Left cardiac atrium (tissue), 4 donors: ENCODE measurements at regions of chr9 and their contacts with region 1.

Region 1: GRCh38 chr9:19925817-19926503 is 137.1 kb upstream of the SLC24A2 start:
- DNase-seq: peak; percentile 60
- ATAC-seq: peak; percentile 89 to 97

Region 2: DNA sequence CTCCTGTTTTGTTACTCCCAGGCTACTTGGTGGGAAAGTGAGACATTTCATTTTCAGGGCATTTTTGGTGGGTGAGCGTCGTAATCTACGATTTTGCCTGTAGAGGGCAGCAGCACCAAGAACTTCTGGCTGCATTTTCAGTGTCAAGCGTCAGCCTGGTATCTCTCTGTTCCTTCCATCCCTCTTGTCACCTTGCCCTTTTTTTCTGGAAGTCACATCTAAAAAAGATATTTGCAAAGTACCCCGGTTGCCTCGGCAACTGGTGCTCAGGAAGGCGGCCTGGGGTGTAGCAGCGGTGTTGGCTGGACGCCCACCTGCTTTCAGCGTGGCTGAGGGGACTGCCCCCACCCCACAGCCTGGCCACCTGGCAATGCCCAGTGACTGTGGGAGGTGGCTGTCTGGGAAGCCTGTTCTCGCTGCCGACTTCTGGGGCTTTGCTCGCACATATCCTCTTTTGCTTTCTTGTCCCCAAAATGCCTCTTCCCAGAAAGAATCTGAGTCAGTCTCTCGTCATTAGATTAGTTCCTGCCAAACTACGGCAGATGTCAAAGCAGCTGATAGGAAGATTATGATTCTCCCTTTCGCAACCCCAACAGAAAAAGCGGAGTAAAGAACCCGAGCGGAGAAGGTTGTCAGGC is 432.7 kb before region 1 on chr9:
- intact Hi-C with region 1: loop called in 1 of 2 experiments (anchors 10 kb)
- DNase-seq: peak; percentile 92
- ATAC-seq: peak; percentile 74 to 89

Region 3: DNA sequence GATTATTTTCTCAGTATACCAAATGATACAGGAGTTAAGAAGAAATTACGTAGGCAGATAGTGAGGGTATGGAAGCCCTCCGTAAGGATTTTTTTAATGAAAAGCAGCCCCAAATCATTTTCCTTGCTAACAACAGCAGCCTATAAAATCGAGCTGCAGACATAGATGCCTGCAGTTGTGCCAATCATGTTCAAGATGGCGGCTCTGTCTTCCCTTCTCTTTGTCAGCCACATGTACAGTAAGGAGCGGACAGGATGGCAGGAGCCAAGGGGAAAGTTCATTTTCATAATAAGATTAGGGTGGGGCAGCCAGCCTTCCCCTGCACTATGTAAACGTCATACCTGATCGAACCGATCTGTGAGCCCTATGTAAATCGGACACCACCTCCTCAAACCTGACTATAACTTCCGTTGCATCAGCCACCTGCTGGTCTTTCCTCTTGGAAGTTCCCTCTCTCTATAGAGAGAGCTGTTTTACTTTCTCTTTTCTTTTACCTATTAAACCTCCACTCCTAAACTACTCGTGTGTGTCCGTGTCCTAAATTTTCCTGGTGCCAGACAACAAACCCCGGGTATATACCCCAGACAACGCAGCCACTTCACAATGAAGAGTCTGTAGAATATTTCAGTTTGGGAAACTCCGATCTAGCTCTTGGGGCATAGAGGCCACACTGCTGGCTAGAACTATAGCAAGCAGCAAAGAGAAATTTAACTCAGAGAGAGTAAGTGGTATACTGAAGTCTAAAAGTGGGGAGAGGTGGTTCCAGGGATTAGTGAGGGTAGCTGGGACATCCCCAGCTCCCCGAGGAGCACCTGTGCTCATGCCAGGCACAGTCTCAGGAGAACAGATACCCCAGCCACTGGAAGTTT is 116.3 kb before region 1 on chr9:
- intact Hi-C with region 1: no loop called
- DNase-seq: no peak
- ATAC-seq: no peak

Region 4: GRCh38 chr9:19967216-19967887 is 41.4 kb after region 1 on chr9:
- intact Hi-C with region 1: no loop called
- DNase-seq: no peak
- ATAC-seq: no peak

Region 5: GRCh38 chr9:20032413-20033006 is 106.5 kb after region 1 on chr9:
- intact Hi-C with region 1: no loop called
- DNase-seq: peak; percentile 22
- ATAC-seq: peak in 1 of 2 donors; percentile 51

Region 6: GRCh38 chr9:20622330-20623020 is 696.5 kb after region 1 on chr9 and contains the start of gene MLLT3:
- intact Hi-C with region 1: loop called in 1 of 2 experiments (anchors 10 kb)
- DNase-seq: peak; percentile 97
- ATAC-seq: peak; percentile 95 to 98
- total RNA-seq, gene MLLT3: 5.3 to 10.2 TPM

Region 7: GRCh38 chr9:20941174-20941690 is 1015.3 kb after region 1 on chr9:
- intact Hi-C with region 1: loop called (anchors 5 to 10 kb)
- DNase-seq: peak; percentile 36
- ATAC-seq: peak; percentile 84 to 92

Region 8: DNA sequence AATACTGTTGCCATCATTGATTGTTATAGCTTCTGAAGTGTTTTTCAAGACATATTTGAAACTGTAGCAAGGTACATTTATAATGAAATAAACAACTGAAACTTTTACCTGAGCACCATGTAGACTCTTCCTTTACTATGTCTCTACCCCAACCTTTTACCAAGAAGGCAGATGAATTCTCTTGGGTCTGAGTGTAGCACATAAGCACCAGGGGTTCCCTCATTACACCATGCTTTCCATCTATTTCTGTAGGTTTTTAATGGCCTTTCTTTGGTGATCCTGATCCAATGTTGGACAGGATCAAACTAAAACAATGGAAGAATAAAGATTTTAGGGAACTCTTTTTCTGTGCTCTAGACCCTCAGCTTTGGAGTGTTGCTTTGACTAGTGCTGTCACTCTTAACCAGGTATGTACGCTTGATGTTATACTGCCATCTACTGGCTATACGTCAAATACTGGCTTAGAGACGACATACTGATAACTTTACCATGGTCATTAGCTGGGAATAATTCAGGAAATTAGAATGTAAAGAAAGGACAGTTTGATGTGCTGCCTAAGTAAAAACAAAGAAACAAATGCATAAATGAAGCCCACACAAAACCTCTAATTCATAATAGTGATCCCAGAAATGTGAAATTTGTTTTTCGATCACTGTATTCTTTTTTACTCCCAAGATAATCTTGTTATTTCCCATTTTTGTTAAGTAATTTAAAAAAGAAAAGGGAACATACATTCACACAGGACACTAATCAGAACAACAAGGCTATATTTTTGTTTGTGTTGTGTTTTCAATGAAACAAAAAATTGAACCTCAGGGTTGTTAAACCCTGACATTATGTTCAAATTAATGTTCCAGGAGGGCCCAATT is 1185.0 kb after region 1 on chr9:
- intact Hi-C with region 1: loop called (anchors 5 kb)
- DNase-seq: no peak
- ATAC-seq: peak; percentile 85 to 92